ENCODE measurements at regions of chr14 and their contacts with region 1.

Region 1: DNA sequence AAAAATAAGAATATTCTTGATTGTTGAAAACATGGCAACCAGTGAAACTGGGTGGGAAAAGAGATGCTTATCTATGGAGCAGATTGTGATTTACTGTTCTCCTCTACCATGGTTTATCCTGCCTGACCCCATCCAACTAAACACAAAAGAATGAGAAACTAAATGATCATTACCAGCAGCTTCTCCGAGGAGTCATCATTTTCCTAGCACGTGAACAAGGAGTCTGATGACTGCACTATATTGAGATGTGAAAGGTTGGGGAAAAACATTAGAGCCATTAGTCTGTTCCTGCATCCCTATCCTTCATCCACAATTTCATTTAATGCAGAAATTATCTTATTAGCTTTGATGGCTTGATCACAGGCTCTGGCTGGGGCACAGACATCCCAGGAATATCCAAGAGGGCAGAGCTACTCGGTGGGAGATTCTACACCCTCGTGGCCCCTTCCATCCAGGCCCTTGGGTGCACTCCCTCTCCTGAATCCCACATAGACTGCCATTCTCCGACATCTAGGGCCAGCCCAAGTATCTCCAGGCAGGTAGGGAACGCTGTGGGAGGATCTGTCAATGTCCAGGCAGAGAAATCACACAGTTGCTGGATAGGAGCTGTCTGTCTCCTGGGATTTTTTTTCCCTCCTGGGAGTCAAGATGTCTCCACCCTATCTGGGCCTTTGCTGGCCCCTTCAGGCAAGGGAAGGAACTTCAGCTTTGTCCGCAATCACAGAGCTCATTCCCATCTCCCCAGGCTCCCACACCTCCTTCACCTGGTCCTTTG is 43.3 kb upstream of the DHRS4 start:
- DNase-seq: peak; percentile 65 to 69
- ATAC-seq: peak; percentile 95 to 99
- H3K4me3 ChIP-seq: no peak overlapping the region
- H3K27ac ChIP-seq: no peak overlapping the region
- H3K4me1 ChIP-seq: no peaks in the 10 kb centered on the region
- CTCF ChIP-seq: peak; percentile 80
- EP300 ChIP-seq: no peak
- POLR2A ChIP-seq: no peak
- RAD21 ChIP-seq: peak; percentile 90 to 94

Region 2: GRCh38 chr14:23580948-23581281 is 329.4 kb before region 1 on chr14:
- CTCF ChIA-PET with region 1: interaction called, 14 read pairs
- POLR2A ChIA-PET with region 1: no interaction called
- DNase-seq: peak in 1 of 2 experiments; percentile 46
- ATAC-seq: no peak; a peak in 1 of 6 replicates
- H3K4me3 ChIP-seq: no peak overlapping the region
- H3K27ac ChIP-seq: no peak overlapping the region
- H3K4me1 ChIP-seq: no peaks in the 10 kb centered on the region
- CTCF ChIP-seq: no peak
- EP300 ChIP-seq: no peak
- POLR2A ChIP-seq: no peak
- RAD21 ChIP-seq: no peak

Region 3: GRCh38 chr14:23631702-23632460 is 278.4 kb before region 1 on chr14:
- CTCF ChIA-PET with region 1: interaction called, 88 read pairs
- POLR2A ChIA-PET with region 1: no interaction called
- DNase-seq: peak; percentile 73 to 75
- ATAC-seq: peak; percentile 78 to 90
- H3K4me3 ChIP-seq: no peak overlapping the region
- H3K27ac ChIP-seq: 0 out of 6 replicates have a peak overlapping the region, but pooled peaks of 1 of the 2 experiments have one; percentile 38
- H3K4me1 ChIP-seq: no peaks in the 10 kb centered on the region
- CTCF ChIP-seq: peak; percentile 78
- EP300 ChIP-seq: no peak
- POLR2A ChIP-seq: no peak
- RAD21 ChIP-seq: peak; percentile 71 to 81

Region 4: GRCh38 chr14:23702656-23703426 is 207.4 kb before region 1 on chr14:
- CTCF ChIA-PET with region 1: interaction called, 10 read pairs
- POLR2A ChIA-PET with region 1: no interaction called
- DNase-seq: no peak
- ATAC-seq: no peak
- H3K4me3 ChIP-seq: no peak overlapping the region
- H3K27ac ChIP-seq: no peak overlapping the region
- H3K4me1 ChIP-seq: no peaks in the 10 kb centered on the region
- CTCF ChIP-seq: no peak
- EP300 ChIP-seq: no peak
- POLR2A ChIP-seq: no peak
- RAD21 ChIP-seq: no peak

Region 5: GRCh38 chr14:23735394-23735793 is 174.9 kb before region 1 on chr14:
- CTCF ChIA-PET with region 1: interaction called, 180 read pairs
- POLR2A ChIA-PET with region 1: no interaction called
- DNase-seq: no peak
- ATAC-seq: no peak
- H3K4me3 ChIP-seq: no peak overlapping the region
- H3K27ac ChIP-seq: no peak overlapping the region
- H3K4me1 ChIP-seq: no peaks in the 10 kb centered on the region
- CTCF ChIP-seq: no peak
- EP300 ChIP-seq: no peak
- POLR2A ChIP-seq: no peak
- RAD21 ChIP-seq: no peak

Region 6: DNA sequence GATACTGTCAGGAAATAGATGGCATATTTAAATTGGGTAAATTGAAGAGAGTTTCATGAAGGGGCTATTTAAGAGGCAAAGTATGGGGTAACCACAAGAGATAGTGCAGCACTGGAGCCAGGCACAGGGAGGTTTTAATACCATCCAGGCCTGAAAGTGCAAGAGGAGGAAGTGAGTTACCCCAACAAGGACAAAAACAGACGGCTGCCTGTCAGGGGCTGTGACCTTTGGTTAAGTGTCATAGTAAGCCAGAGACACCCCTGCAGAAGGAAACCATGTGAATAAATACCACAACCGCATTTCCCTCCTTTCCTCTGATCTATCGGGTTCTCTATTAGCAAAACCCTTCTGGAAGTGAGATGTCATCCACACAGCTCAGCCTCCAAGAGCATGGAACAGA is 78.7 kb before region 1 on chr14:
- CTCF ChIA-PET with region 1: interaction called, 14 read pairs
- POLR2A ChIA-PET with region 1: no interaction called
- DNase-seq: no peak
- ATAC-seq: no peak
- H3K4me3 ChIP-seq: no peak overlapping the region
- H3K27ac ChIP-seq: peak overlapping the region in 1 of 2 experiments; percentile 56; a peak in 3 of 6 replicates
- H3K4me1 ChIP-seq: peaks cover 31% of the 10 kb centered on the region
- CTCF ChIP-seq: no peak
- EP300 ChIP-seq: no peak
- POLR2A ChIP-seq: no peak
- RAD21 ChIP-seq: no peak

Region 7: DNA sequence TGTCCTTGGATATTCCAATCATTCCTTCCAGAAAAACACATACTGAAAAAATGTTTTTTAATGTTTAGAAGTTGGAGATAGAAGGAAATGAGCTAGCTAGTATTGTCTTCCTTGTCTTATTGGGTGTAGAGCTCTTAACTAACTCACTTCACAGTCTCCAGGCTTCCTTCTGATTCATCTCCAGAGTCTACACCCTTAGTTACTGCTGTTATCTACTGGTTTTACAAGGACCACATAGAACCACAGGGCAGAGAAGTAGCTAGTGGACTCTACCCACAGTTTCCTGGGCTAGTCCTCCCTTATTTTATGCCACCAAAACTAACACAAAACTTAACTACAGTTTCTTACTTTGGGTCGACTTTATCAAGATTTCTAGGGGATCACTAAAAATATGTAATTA is 12.3 kb after region 1 on chr14:
- CTCF ChIA-PET with region 1: interaction called, 26 read pairs
- POLR2A ChIA-PET with region 1: no interaction called
- DNase-seq: no peak
- ATAC-seq: no peak
- H3K4me3 ChIP-seq: no peak overlapping the region
- H3K27ac ChIP-seq: no peak overlapping the region
- H3K4me1 ChIP-seq: no peaks in the 10 kb centered on the region
- CTCF ChIP-seq: no peak
- EP300 ChIP-seq: no peak
- POLR2A ChIP-seq: no peak
- RAD21 ChIP-seq: no peak